Sigmoid colon (tissue), 7 donors: ENCODE measurements at regions of chr14 and their contacts with region 1.

Region 1: GRCh38 chr14:23006544-23007419 is 3.2 kb downstream of the C14orf93 start:
- DNase-seq: peak; percentile 98
- H3K4me3 ChIP-seq: peak overlapping the region; percentile 55 to 76 (median 66)
- H3K27ac ChIP-seq: peak overlapping the region; percentile 85 to 96 (median 93)
- H3K4me1 ChIP-seq: peaks cover 0 to 25% (median 13%) of the 10 kb centered on the region in 4 donors
- H3K27me3 ChIP-seq: no peaks in the 10 kb centered on the region
- CTCF ChIP-seq: peak in 1 of 4 experiments; percentile 14
- EP300 ChIP-seq: no peak
- POLR2A ChIP-seq: peak; percentile 80 to 90

Region 2: DNA sequence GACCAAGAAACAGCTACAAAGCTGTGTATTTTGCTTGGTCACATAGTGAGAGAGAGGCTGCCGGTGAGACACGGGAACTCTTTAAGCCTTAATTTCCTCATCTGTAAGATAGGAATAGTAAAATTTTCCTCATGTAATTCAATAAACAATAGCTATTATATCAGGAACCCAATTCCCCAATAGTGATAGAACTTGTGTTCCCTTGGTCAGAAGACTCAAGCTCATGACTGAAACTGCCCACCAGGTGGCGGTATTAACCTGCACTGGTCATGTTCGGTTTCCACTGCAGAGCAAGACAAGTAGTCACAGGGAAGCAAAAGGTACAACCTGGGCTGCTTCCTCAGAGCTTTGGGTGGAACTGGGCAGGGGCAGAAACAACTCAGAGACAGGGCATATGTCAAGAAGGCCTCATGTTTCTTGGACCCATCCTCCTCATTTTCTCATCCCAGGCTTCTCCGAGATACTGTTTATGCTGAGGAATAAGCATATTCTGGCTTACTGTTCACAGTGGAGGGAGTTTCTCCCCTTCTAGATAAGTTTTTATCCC is 20.2 kb before region 1 on chr14:
- intact Hi-C with region 1: loop called (anchors 2 kb)
- DNase-seq: peak; percentile 94
- H3K4me3 ChIP-seq: no peak overlapping the region
- H3K27ac ChIP-seq: no peak overlapping the region
- H3K4me1 ChIP-seq: peaks cover 0 to 17% (median 5%) of the 10 kb centered on the region in 4 donors
- H3K27me3 ChIP-seq: peaks cover 0 to 1% (median 0%) of the 10 kb centered on the region in 3 donors
- CTCF ChIP-seq: peak; percentile 67 to 91 (median 90)
- EP300 ChIP-seq: no peak
- POLR2A ChIP-seq: no peak

Region 3: GRCh38 chr14:23034483-23035302 is 27.9 kb after region 1 on chr14 and contains the start of gene PSMB5:
- intact Hi-C with region 1: loop called (anchors 1 kb)
- DNase-seq: peak; percentile 96
- H3K4me3 ChIP-seq: peak within 1 kb of the TSS; percentile 59 to 94 (median 80)
- H3K27ac ChIP-seq: peak within 1 kb of the TSS; percentile 88 to 97 (median 93)
- H3K4me1 ChIP-seq: peaks cover 0 to 14% (median 13%) of the 10 kb centered on the region in 4 donors
- H3K27me3 ChIP-seq: no peaks in the 10 kb centered on the region
- CTCF ChIP-seq: peak in 2 of 4 experiments; percentile 20 to 43
- EP300 ChIP-seq: no peak
- POLR2A ChIP-seq: peak in 1 of 2 donors; percentile 36
- total RNA-seq, gene PSMB5: 113 to 179 (median 135) TPM

Region 4: GRCh38 chr14:23057757-23058653 is 51.2 kb after region 1 on chr14:
- intact Hi-C with region 1: loop called (anchors 5 kb)
- DNase-seq: peak; percentile 94
- H3K4me3 ChIP-seq: peak overlapping the region; percentile 48 to 77 (median 68)
- H3K27ac ChIP-seq: peak overlapping the region; percentile 80 to 91 (median 84)
- H3K4me1 ChIP-seq: peaks cover 0 to 35% (median 29%) of the 10 kb centered on the region in 4 donors
- H3K27me3 ChIP-seq: no peaks in the 10 kb centered on the region
- CTCF ChIP-seq: peak; percentile 89 to 96 (median 94)
- EP300 ChIP-seq: no peak
- POLR2A ChIP-seq: no peak

Region 5: GRCh38 chr14:23137192-23137829 is 130.5 kb after region 1 on chr14:
- intact Hi-C with region 1: no loop called
- DNase-seq: no peak
- H3K4me3 ChIP-seq: no peak overlapping the region
- H3K27ac ChIP-seq: peak overlapping the region in 1 of 4 donors; percentile 17
- H3K4me1 ChIP-seq: peaks cover 0 to 40% (median 30%) of the 10 kb centered on the region in 4 donors
- H3K27me3 ChIP-seq: no peaks in the 10 kb centered on the region
- CTCF ChIP-seq: no peak
- EP300 ChIP-seq: no peak
- POLR2A ChIP-seq: no peak